Activated CD4-positive, alpha-beta T cell treated with anti-CD3 and anti-CD28 coated beads for 36 hours (primary cell): ENCODE measurements at regions of chr18 and their contacts with region 1.

Region 1: DNA sequence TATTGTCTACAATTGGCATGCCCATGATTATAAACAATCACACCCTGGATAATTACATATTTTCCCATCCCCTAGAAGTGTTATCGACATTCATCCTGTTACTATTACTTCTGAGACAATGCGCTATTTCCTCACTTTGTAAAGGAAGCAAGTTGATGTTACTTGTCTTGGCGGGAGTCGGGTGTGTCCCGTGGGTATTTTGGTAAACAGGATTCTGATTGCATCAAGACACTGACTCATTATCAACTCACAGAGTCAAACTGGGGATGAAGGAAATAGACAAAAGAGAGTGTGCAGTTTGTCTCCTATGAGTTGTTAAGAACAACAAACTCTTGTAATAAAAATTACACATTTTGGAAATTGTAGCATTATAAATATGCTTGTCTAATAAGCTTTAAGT is 142.7 kb downstream of the GALR1 start:
- DNase-seq: no peak
- ATAC-seq: no peak
- H3K4me3 Mint-ChIP-seq: no peak overlapping the region
- H3K27ac Mint-ChIP-seq: no peak overlapping the region
- H3K4me1 Mint-ChIP-seq: no peaks in the 10 kb centered on the region
- H3K27me3 Mint-ChIP-seq: peaks cover 15% of the 10 kb centered on the region

Region 2: DNA sequence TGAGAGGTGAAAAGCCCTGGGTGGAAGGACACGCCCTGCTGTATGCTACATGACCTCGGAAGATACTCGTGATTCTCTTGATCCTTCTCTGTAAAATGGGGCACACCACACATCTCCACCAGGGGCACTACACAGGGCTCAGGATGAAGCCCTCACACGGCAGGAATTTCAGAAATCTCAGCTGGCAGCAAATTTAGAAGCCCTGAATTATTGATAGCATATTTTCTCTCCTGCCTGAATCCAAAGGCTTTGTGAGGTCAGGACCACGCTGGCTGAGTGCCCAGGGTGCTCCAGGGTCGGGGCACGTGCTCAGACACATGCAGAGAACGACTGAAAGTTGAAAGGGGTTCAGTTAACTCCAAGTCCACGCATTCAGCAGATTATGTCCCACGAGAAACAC is 184.8 kb before region 1 on chr18:
- CTCF ChIA-PET with region 1: no interaction called
- POLR2A ChIA-PET with region 1: no interaction called
- intact Hi-C with region 1: no loop called
- DNase-seq: peak; percentile 69
- ATAC-seq: peak; percentile 84
- H3K4me3 Mint-ChIP-seq: no peak overlapping the region
- H3K27ac Mint-ChIP-seq: peak overlapping the region; percentile 73
- H3K4me1 Mint-ChIP-seq: peaks cover 44% of the 10 kb centered on the region
- H3K27me3 Mint-ChIP-seq: no peaks in the 10 kb centered on the region

Region 3: GRCh38 chr18:77271576-77272481 is 120.5 kb before region 1 on chr18:
- CTCF ChIA-PET with region 1: no interaction called
- POLR2A ChIA-PET with region 1: no interaction called
- intact Hi-C with region 1: no loop called
- DNase-seq: no peak
- ATAC-seq: no peak
- H3K4me3 Mint-ChIP-seq: no peak overlapping the region
- H3K27ac Mint-ChIP-seq: no peak overlapping the region
- H3K4me1 Mint-ChIP-seq: no peaks in the 10 kb centered on the region
- H3K27me3 Mint-ChIP-seq: peaks cover 13% of the 10 kb centered on the region

Region 4: GRCh38 chr18:77422974-77423867 is 30.9 kb after region 1 on chr18:
- CTCF ChIA-PET with region 1: no interaction called
- POLR2A ChIA-PET with region 1: no interaction called
- intact Hi-C with region 1: loop called in 1 of 2 experiments (anchors 5 kb)
- DNase-seq: no peak
- ATAC-seq: no peak
- H3K4me3 Mint-ChIP-seq: no peak overlapping the region
- H3K27ac Mint-ChIP-seq: no peak overlapping the region
- H3K4me1 Mint-ChIP-seq: no peaks in the 10 kb centered on the region
- H3K27me3 Mint-ChIP-seq: peaks cover 6% of the 10 kb centered on the region